ENCODE measurements at regions of chr6 and their contacts with region 1.

Region 1: DNA sequence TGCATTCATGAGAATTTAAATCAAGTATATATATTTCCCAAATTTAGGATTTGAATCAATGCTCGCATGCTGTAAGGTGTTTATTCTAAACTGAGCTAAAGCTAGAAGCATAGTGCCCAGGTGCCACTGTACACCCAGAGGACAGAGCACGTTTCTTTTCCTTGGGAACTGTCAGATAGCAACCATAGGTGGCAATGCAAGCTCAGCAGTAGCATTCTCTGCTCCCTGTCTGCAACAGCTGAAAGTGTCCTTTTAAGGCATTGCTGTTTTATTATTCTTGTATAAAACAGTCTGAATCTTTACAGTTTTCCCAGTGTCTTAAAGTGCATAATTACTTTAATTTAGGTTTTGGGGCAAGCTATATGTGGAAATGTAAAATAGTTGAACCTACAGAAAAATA is 443.4 kb upstream of the MMS22L start:
- DNase-seq: peak in 1 of 2 experiments; percentile 13
- H3K4me3 ChIP-seq: no peak overlapping the region
- H3K4me3 Mint-ChIP-seq: no peak overlapping the region
- H3K27ac Mint-ChIP-seq: no peak overlapping the region
- H3K4me1 ChIP-seq: no peaks in the 10 kb centered on the region
- H3K4me1 Mint-ChIP-seq: no peaks in the 10 kb centered on the region
- H3K27me3 ChIP-seq: no peaks in the 10 kb centered on the region
- H3K27me3 Mint-ChIP-seq: no peaks in the 10 kb centered on the region
- CTCF ChIP-seq: peak in 1 of 2 experiments; percentile 19

Region 2: GRCh38 chr6:97586344-97586743 is 140.0 kb before region 1 on chr6:
- CTCF ChIA-PET with region 1: no interaction called
- POLR2A ChIA-PET with region 1: no interaction called
- intact Hi-C with region 1: no loop called
- DNase-seq: peak in 1 of 2 experiments; percentile 3
- H3K4me3 ChIP-seq: no peak overlapping the region
- H3K4me3 Mint-ChIP-seq: no peak overlapping the region
- H3K27ac Mint-ChIP-seq: no peak overlapping the region
- H3K4me1 ChIP-seq: no peaks in the 10 kb centered on the region
- H3K4me1 Mint-ChIP-seq: no peaks in the 10 kb centered on the region
- H3K27me3 ChIP-seq: no peaks in the 10 kb centered on the region
- H3K27me3 Mint-ChIP-seq: no peaks in the 10 kb centered on the region
- CTCF ChIP-seq: peak in 1 of 2 experiments; percentile 26

Region 3: GRCh38 chr6:97925504-97925903 is 199.1 kb after region 1 on chr6:
- CTCF ChIA-PET with region 1: no interaction called
- POLR2A ChIA-PET with region 1: no interaction called
- intact Hi-C with region 1: loop called (anchors 2 kb)
- DNase-seq: no peak
- H3K4me3 ChIP-seq: no peak overlapping the region
- H3K4me3 Mint-ChIP-seq: no peak overlapping the region
- H3K27ac Mint-ChIP-seq: no peak overlapping the region
- H3K4me1 ChIP-seq: no peaks in the 10 kb centered on the region
- H3K4me1 Mint-ChIP-seq: no peaks in the 10 kb centered on the region
- H3K27me3 ChIP-seq: no peaks in the 10 kb centered on the region
- H3K27me3 Mint-ChIP-seq: no peaks in the 10 kb centered on the region
- CTCF ChIP-seq: peak; percentile 9 to 25

Region 4: GRCh38 chr6:97978855-97979271 is 252.5 kb after region 1 on chr6:
- CTCF ChIA-PET with region 1: no interaction called
- POLR2A ChIA-PET with region 1: no interaction called
- intact Hi-C with region 1: loop called (anchors 1 kb)
- DNase-seq: peak; percentile 60 to 62
- H3K4me3 ChIP-seq: no peak overlapping the region
- H3K4me3 Mint-ChIP-seq: peak overlapping the region; percentile 52
- H3K27ac Mint-ChIP-seq: no peak overlapping the region
- H3K4me1 ChIP-seq: no peaks in the 10 kb centered on the region
- H3K4me1 Mint-ChIP-seq: no peaks in the 10 kb centered on the region
- H3K27me3 ChIP-seq: no peaks in the 10 kb centered on the region
- H3K27me3 Mint-ChIP-seq: peaks cover 2% of the 10 kb centered on the region
- CTCF ChIP-seq: peak; percentile 42 to 58

Measured in Caco-2 (cell line).